RWPE1 (cell line): ENCODE measurements at regions of chr14 and their contacts with region 1.

Region 1: DNA sequence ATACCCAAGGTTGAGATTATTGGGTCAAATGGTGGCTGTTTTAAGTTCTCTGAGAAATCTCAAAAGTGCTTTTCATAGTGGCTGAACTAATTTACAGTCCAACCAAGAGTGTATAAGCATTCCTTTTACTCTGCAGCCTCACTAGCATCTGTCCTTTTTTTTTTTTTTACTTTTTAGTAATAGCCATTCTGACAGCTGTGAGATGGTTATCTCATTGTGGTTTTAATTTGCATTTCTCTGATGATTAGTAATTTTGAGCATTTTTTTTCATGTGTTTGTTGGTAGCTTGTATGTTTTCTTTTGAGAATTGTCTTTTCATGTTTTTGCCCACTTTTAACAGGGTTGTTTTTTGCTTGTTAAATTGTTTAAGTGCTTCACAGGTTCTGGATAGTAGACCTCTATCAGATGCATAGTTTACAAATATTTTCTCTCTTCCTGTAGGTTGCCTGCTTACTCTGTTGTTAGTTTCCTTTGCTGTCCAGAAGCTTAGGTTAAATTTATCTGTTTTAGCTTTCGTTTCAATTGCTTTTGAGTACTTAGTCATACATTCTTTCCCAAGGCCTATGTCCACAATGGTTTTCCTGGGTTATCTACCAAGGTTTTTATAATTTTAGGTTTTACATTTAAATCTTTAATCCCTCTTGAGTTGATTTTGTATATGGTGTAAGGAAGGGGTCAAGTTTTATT is 881.3 kb upstream of the SEL1L start:
- DNase-seq: no peak
- H3K27ac ChIP-seq: no peak overlapping the region
- CTCF ChIP-seq: no peak

Region 2: DNA sequence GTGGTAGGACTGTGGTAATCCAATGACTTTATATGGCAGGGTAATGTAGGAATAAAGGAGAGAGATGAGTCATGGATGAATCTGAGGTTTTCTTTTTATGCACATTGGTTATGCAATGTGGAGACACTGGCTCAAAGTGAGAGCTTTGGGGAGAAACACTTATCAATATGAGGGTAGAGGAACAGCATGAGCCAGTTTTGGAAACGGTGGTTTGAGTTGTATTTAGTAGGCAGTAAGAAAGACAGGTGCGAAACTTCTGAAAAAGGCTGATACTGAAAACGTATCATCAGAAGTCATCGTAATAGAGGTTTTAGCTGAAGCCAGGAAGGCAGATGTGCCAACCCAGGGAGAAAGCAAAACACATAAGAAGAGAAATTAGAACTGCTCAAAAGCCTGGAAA is 26.5 kb before region 1 on chr14:
- CTCF ChIA-PET with region 1: no interaction called
- POLR2A ChIA-PET with region 1: interaction called, 11 read pairs
- DNase-seq: no peak
- H3K27ac ChIP-seq: no peak overlapping the region
- CTCF ChIP-seq: no peak